CD4-positive, alpha-beta T cell (primary cell): ENCODE measurements at regions of chr11 and their contacts with region 1.

Region 1: DNA sequence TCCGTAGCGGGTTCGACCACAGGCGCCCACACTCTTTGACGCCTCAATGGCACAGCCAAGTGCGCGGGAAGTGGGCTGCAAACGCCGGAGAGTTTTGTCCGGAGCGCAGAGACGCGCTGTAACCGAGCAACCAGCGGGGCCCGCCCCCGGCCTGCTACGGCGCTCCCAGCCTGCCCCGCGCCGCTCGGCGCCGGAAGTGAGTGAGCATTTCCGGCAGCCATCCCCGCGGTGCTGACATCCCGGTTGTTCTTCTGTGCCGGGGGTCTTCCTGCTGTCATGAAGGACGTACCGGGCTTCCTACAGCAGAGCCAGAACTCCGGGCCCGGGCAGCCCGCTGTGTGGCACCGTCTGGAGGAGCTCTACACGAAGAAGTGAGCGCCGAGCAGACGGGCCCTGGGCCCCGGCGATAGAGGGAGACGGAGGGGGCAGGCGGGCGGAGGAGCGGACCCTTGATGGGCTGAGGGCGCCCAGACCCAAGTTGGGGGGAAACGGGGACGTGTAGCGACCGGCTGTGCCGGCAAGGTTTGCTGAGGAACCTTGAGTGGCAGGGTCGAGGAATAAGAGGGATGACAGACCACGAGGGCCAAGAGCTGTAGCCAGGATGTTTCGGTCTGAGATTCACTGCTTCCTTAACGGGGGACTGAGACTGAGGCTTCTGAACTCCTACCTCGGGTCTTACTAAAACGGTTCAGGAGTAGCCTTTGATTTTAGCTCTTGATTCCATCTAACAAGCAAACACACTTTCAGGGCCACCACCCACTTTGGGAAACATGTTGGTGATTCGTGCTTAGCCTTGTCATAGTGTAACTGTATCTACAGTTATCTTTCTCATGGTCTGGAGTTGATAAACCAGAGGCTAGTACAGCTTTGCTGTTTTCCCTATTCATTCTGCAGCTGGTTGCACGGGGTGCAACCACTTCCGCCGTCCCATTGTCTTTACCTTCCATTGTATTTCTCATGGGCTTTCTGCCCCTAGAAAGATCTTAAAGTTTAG is at the start of gene PSMD13:
- DNase-seq: peak; percentile 76 to 94 (median 84)
- ATAC-seq: peak; percentile 79
- H3K4me3 ChIP-seq: peak within 1 kb of the TSS; percentile 91
- H3K4me3 Mint-ChIP-seq: peak within 1 kb of the TSS; percentile 100
- H3K27ac ChIP-seq: peak within 1 kb of the TSS; percentile 97 to 100
- H3K27ac Mint-ChIP-seq: peak within 1 kb of the TSS; percentile 91
- H3K4me1 ChIP-seq: peaks cover 27% of the 10 kb centered on the region
- H3K4me1 Mint-ChIP-seq: peaks cover 55% of the 10 kb centered on the region
- H3K27me3 ChIP-seq: no peaks in the 10 kb centered on the region
- H3K27me3 Mint-ChIP-seq: no peaks in the 10 kb centered on the region
- CTCF ChIP-seq: peak; percentile 31
- total RNA-seq, gene PSMD13: 56.9 to 57.8 TPM

Region 2: GRCh38 chr11:288328-289144 is 51.5 kb after region 1 on chr11 and contains the start of gene PGGHG:
- CTCF ChIA-PET with region 1: no interaction called
- POLR2A ChIA-PET with region 1: interaction called, 11 read pairs
- intact Hi-C with region 1: loop called in 1 of 2 experiments (anchors 5 kb)
- DNase-seq: peak in 11 of 14 experiments; percentile 18 to 75 (median 57)
- ATAC-seq: peak; percentile 10
- H3K4me3 ChIP-seq: peak within 1 kb of the TSS; percentile 82
- H3K4me3 Mint-ChIP-seq: peak within 1 kb of the TSS; percentile 91
- H3K27ac ChIP-seq: peak within 1 kb of the TSS; percentile 72 to 98
- H3K27ac Mint-ChIP-seq: peak within 1 kb of the TSS; percentile 93
- H3K4me1 ChIP-seq: peaks cover 42% of the 10 kb centered on the region
- H3K4me1 Mint-ChIP-seq: peaks cover 34% of the 10 kb centered on the region
- H3K27me3 ChIP-seq: peaks cover 0 to 5% of the 10 kb centered on the region in 2 experiments
- H3K27me3 Mint-ChIP-seq: peaks cover 4% of the 10 kb centered on the region
- CTCF ChIP-seq: no peak
- total RNA-seq, gene PGGHG: 670 to 671 TPM

Region 3: GRCh38 chr11:342328-342727 is 105.3 kb after region 1 on chr11:
- CTCF ChIA-PET with region 1: no interaction called
- POLR2A ChIA-PET with region 1: no interaction called
- intact Hi-C with region 1: no loop called
- DNase-seq: no peak
- ATAC-seq: no peak
- H3K4me3 ChIP-seq: no peak overlapping the region
- H3K4me3 Mint-ChIP-seq: no peak overlapping the region
- H3K27ac ChIP-seq: no peak overlapping the region
- H3K27ac Mint-ChIP-seq: no peak overlapping the region
- H3K4me1 ChIP-seq: peaks cover 8% of the 10 kb centered on the region
- H3K4me1 Mint-ChIP-seq: peaks cover 11% of the 10 kb centered on the region
- H3K27me3 ChIP-seq: no peaks in the 10 kb centered on the region
- H3K27me3 Mint-ChIP-seq: no peaks in the 10 kb centered on the region
- CTCF ChIP-seq: no peak

Region 4: DNA sequence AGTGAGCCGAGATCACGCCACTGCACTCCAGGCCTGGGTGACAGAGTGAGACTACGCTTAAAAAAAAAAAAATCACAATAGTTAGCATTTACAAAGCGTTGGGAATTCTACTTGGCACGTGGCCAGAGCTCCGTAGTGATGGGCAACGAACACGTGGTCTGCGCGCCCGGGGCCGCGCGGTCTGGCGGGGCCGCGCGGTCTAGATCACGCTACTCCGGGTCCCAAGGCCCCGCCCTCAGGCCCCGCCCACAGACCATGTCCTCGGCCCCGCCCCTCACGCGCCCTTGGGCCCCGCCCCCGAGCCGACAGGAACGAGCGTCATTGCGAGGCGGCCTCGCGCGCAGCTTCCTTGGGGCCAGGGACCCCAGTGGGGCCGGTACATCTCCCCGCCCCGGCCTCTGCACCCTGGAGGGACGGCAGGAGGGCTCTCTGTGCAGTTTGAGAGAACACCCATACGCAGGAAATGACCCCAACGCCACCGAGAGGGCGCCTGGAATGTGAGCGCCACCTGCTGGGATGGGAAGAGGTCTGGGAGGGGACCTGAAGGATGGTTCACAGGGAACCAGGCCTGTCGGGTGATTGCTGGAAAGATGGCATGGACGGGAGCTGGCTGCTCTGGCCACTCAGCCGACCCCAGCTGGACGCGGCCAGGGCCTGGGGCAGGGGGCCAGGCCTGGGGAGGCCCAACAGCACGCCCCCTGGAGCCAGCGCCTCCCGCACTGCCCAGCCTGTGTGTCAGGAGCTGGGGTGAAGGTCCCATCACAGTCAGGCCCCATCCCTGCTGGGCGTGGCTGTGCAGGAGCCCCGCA is 211.1 kb after region 1 on chr11:
- CTCF ChIA-PET with region 1: no interaction called
- POLR2A ChIA-PET with region 1: interaction called, 6 read pairs
- intact Hi-C with region 1: loop called in 1 of 2 experiments (anchors 1 kb)
- DNase-seq: peak; percentile 91 to 98 (median 94)
- ATAC-seq: peak; percentile 66
- H3K4me3 ChIP-seq: peak overlapping the region; percentile 63
- H3K4me3 Mint-ChIP-seq: peak overlapping the region; percentile 93
- H3K27ac ChIP-seq: peak overlapping the region; percentile 84 to 89
- H3K27ac Mint-ChIP-seq: peak overlapping the region; percentile 95
- H3K4me1 ChIP-seq: peaks cover 38% of the 10 kb centered on the region
- H3K4me1 Mint-ChIP-seq: peaks cover 26% of the 10 kb centered on the region
- H3K27me3 ChIP-seq: no peaks in the 10 kb centered on the region
- H3K27me3 Mint-ChIP-seq: no peaks in the 10 kb centered on the region
- CTCF ChIP-seq: peak; percentile 93

Region 5: GRCh38 chr11:809287-810039 is 572.4 kb after region 1 on chr11 and contains the start of gene RPLP2:
- CTCF ChIA-PET with region 1: no interaction called
- POLR2A ChIA-PET with region 1: no interaction called
- intact Hi-C with region 1: loop called in 1 of 2 experiments (anchors 10 kb)
- DNase-seq: peak; percentile 93 to 99 (median 97)
- ATAC-seq: peak; percentile 82
- H3K4me3 ChIP-seq: peak within 1 kb of the TSS; percentile 92
- H3K4me3 Mint-ChIP-seq: peak within 1 kb of the TSS; percentile 95
- H3K27ac ChIP-seq: peak within 1 kb of the TSS; percentile 95 to 99
- H3K27ac Mint-ChIP-seq: peak within 1 kb of the TSS; percentile 99
- H3K4me1 ChIP-seq: peaks cover 42% of the 10 kb centered on the region
- H3K4me1 Mint-ChIP-seq: peaks cover 35% of the 10 kb centered on the region
- H3K27me3 ChIP-seq: no peaks in the 10 kb centered on the region
- H3K27me3 Mint-ChIP-seq: no peaks in the 10 kb centered on the region
- CTCF ChIP-seq: no peak
- total RNA-seq, gene RPLP2: 5,234 to 5,390 TPM